SK-N-SH (cell line): ENCODE measurements at regions of chr5 and their contacts with region 1.

Region 1: DNA sequence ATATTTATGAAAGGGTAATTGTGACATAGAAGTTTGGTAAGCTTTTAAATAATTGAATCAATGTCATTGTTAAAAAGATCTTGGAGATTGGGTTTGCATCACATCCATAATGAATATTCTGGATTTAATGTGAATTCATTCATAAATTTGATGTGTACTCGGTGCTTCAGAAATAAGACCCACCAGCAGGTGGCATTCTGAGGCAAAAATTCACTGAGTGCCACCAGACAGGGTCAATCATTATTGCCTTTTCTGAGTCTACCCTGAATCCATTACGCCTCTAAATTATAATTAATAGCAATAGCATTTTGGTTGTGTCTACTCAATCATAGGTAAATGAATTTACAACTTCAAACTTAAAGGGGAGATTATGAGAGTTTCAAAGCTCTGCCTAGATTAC is 1.0 kb downstream of the TRPC7 start:
- DNase-seq: peak; percentile 30
- H3K4me3 ChIP-seq: no peak overlapping the region
- H3K27ac ChIP-seq: no peak overlapping the region
- H3K4me1 ChIP-seq: no peaks in the 10 kb centered on the region; a peak in 1 of 4 replicates
- H3K27me3 ChIP-seq: no peaks in the 10 kb centered on the region
- CTCF ChIP-seq: peak; percentile 60
- EP300 ChIP-seq: no peak
- RAD21 ChIP-seq: peak; percentile 57

Region 2: DNA sequence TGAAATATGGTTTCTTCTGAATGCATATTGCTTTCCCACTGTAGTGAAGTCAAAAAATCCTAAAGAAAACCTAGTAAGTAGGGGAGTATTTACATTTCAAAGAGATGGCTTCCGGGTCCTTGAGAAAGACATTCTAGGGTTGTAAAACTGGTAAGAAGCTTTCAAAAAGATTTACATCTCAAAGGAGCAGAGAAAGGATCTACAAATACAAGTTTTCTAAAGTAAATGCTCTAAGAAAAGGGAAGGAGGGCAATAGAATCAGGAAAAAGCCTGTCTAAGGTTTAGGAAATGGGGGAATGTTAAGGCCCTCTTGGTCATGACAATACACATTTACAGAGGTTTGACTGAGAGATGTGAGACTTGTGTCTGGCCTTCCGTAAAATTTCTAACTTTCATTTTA is 17.8 kb after region 1 on chr5:
- CTCF ChIA-PET with region 1: interaction called, 12 read pairs
- POLR2A ChIA-PET with region 1: no interaction called
- DNase-seq: no peak
- H3K4me3 ChIP-seq: no peak overlapping the region
- H3K27ac ChIP-seq: no peak overlapping the region
- H3K4me1 ChIP-seq: no peaks in the 10 kb centered on the region
- H3K27me3 ChIP-seq: no peaks in the 10 kb centered on the region
- CTCF ChIP-seq: no peak
- EP300 ChIP-seq: no peak
- RAD21 ChIP-seq: no peak

Region 3: DNA sequence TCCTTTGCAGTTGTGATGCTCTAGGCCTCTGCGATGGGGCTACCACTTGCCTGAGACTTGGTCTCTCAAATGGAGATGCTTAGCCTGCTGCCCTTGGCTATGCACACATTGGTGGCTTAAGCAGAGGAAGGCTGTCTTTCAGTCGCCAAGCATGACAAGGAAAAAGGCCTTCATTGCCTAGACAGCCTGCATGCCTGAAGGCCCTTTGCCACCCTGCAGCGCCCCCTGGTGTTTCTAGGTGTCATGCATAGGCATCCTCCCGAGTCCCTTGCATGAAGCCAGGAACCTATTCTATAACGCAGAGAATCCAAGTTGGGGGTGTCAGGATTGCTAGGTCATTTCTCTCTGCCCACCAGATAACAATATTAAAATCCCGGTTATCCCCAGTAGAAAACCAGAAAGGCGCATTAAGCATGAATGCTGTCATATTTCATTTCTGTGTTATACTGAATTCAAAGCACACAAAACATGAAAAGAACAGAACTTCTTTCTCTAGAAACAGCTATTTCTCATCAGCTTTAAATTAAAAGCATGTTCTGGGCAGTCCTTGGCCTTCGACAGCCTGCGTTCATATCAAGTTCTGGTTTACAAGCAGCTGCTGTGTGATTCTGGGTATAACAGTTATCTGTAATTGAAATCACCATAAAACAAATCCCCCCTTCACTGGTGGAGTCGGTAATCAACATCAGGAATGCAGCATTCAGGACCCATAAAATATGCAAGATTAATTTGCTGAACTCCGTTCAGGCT is 60.7 kb after region 1 on chr5:
- CTCF ChIA-PET with region 1: interaction called, 18 read pairs
- POLR2A ChIA-PET with region 1: no interaction called
- DNase-seq: peak; percentile 66
- H3K4me3 ChIP-seq: peak overlapping the region in 1 of 2 experiments; percentile 35; a peak in 1 of 4 replicates
- H3K27ac ChIP-seq: no peak overlapping the region
- H3K4me1 ChIP-seq: peaks cover 0 to 4% of the 10 kb centered on the region in 2 experiments; a peak in 1 of 4 replicates
- H3K27me3 ChIP-seq: no peaks in the 10 kb centered on the region; the same call in 1 of the 2 replicates
- CTCF ChIP-seq: peak; percentile 80
- EP300 ChIP-seq: no peak
- RAD21 ChIP-seq: peak; percentile 74

Region 4: DNA sequence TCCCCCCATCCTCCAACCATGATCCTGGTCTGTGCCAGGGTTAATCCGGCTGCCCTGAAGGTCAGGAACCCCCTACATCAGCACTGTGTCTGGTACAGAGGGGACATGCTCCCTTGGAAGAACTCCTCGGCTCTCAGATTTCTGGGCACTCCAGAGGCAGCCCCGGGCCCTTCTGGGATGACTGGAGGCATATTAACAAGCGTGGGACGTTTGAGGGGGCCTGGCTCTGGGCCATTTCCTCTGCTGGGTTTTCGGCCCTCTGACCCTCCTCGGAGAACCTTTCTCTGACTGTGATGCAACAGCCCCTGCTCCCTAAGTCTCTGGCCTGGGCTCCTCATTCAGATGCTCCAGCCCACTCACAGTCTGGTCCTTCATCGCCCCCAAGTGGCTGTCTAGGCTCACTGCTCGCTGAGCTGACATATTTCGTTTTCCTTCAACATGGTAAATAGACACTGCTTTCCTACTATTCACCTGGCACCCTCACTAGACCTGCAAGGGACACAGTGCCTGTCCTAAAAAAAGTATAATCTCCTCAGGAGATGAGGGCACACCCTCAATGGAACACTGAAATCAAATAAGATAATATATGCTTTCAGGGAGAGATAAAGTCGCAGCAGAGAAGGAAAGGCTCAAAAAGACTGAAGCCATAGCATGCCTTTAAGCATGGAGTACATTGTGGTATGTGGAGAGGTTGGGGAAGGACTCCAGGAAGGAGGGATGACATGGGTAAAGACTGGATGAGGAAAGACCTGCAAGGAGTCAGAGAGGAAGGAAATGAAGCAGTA is 405.8 kb after region 1 on chr5:
- CTCF ChIA-PET with region 1: interaction called, 39 read pairs
- POLR2A ChIA-PET with region 1: no interaction called
- DNase-seq: peak; percentile 73
- H3K4me3 ChIP-seq: no peak overlapping the region; a peak in 1 of 4 replicates
- H3K27ac ChIP-seq: no peak overlapping the region
- H3K4me1 ChIP-seq: no peaks in the 10 kb centered on the region; a peak in 1 of 4 replicates
- H3K27me3 ChIP-seq: no peaks in the 10 kb centered on the region; the same call in none of the 2 replicates
- CTCF ChIP-seq: peak; percentile 91
- EP300 ChIP-seq: no peak
- RAD21 ChIP-seq: peak; percentile 92